Right ventricle myocardium inferior (tissue), 1 donor: ENCODE measurements at regions of chr14 and their contacts with region 1.

Region 1: DNA sequence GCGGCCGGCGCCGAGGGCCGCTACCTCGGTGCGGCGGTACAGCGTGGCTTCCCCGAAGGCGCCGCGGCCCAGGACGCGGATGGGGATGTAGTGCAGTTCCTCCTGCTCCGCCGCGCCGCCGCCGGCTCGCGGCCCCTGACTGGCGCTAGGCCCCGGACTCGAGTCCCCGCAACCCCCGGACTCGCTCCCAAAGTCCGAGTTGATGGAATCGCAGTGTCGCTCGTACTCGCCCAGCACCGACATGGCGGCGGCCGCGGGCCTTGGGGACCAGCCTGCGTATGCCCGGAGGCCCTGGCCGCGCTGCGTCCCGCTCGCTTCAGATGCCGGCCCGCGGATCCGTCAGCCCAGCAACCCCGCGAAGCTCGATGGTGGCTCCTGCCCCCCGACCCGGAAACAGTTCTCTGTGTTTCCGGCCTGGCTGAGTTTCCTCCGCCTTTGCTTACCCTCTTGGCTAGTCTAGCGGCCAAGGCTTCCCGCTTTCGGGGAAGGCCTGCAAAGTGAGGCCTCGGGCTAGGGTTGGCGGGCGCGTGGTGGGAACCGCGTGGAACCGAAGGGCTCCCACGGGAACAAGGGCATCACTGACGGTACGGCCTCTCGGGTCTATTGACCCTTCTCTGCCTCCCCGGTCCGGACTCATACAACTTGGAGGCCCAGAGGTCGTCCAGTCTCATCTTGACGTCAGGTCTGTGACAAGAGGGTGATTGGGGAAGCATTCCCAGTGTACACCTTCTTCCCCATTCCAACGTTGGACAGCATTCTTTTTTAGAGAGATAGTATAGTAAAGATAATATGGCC is at the start of gene NEK9:
- DNase-seq: peak; percentile 93
- ATAC-seq: peak; percentile 95
- total RNA-seq, gene NEK9: 102 TPM

Region 2: GRCh38 chr14:75011356-75011994 is 115.4 kb before region 1 on chr14:
- intact Hi-C with region 1: no loop called
- DNase-seq: no peak
- ATAC-seq: peak; percentile 30

Region 3: GRCh38 chr14:75063407-75064213 is 63.3 kb before region 1 on chr14 and contains the start of gene ACYP1:
- intact Hi-C with region 1: no loop called
- DNase-seq: peak; percentile 94
- ATAC-seq: peak; percentile 94
- total RNA-seq, gene ACYP1: 11.7 TPM

Region 4: DNA sequence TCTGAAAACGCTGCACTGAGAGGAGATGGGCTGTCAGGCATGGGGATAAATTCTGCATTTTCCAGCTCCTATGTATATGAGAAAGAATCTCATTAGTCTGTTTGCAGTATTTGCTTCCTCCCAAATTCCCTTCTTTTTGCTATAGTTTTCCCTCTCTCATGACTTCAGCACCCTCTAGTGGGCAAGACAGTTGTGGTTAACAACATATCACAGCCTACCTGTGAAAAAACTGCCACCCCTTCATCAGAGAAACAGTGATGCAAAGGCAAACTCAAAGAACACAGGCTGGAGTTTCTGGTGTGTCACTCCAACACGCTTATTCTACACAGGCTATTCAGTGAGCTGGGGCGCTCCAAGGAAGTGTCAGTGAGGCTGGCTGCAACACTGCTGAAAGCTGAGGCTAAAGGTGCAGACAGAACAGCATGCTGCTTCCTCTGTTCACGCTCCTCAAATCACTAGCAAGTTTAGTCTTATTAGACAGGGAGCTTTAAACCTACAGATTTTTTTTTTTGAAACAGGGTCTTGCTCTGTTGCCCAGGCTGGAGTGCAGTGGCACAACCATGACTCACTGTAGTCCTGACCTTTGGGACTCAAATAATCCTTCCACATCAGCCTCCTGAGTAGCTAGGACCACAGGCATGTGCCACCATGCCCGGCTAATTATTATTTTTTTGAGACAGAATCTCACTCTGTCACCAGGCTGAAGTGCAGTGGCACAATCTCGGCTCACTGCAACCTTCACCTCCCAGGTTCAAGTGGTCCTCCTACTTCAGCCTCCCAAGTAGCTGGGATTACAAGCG is 38.1 kb before region 1 on chr14:
- intact Hi-C with region 1: no loop called
- DNase-seq: no peak
- ATAC-seq: peak; percentile 68

Region 5: DNA sequence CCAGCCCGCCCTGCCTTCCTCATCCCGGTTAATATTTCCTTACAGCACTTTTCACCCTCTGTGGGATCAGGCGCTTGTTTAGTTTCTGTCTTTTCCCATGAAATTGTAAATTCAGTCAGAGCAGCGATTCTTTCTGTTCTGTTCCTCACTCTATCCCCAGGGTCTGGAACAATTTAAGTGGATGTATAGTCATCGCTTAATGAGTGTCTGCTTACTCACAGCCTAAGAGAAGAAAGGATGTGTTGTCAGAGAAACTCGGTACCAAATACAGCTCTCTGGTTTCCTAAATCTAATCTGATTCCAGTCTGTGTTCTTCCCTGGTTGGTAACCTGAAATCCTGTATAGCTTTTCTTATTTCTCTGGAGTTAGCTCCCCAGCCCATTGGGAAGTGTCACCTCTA is 196.7 kb after region 1 on chr14:
- intact Hi-C with region 1: no loop called
- DNase-seq: no peak
- ATAC-seq: no peak

Region 6: GRCh38 chr14:75479770-75480600 is 353.1 kb after region 1 on chr14:
- intact Hi-C with region 1: loop called (anchors 5 kb)
- DNase-seq: no peak
- ATAC-seq: no peak